SK-N-SH (cell line): ENCODE measurements at regions of chr2 and their contacts with region 1.

Region 1: GRCh38 chr2:176554101-176555048 is 285.1 kb downstream of the MTX2 start:
- DNase-seq: peak; percentile 83
- H3K4me3 ChIP-seq: peak overlapping the region; percentile 16 to 39
- H3K27ac ChIP-seq: peak overlapping the region; percentile 10 to 94; a peak in 3 of 4 replicates
- H3K4me1 ChIP-seq: peaks cover 8 to 22% of the 10 kb centered on the region in 2 experiments; a peak in 3 of 4 replicates
- H3K27me3 ChIP-seq: no peaks in the 10 kb centered on the region
- CTCF ChIP-seq: peak; percentile 79
- EP300 ChIP-seq: peak in 1 of 2 experiments; percentile 40; a peak in 1 of 4 replicates
- RAD21 ChIP-seq: peak; percentile 89

Region 2: GRCh38 chr2:176146101-176146500 is 408.3 kb before region 1 on chr2:
- CTCF ChIA-PET with region 1: interaction called, 107 read pairs
- POLR2A ChIA-PET with region 1: interaction called, 18 read pairs
- DNase-seq: no peak
- H3K4me3 ChIP-seq: no peak overlapping the region
- H3K27ac ChIP-seq: no peak overlapping the region
- H3K4me1 ChIP-seq: peaks cover 0 to 9% of the 10 kb centered on the region in 2 experiments; a peak in 1 of 4 replicates
- H3K27me3 ChIP-seq: no peaks in the 10 kb centered on the region
- CTCF ChIP-seq: no peak
- EP300 ChIP-seq: no peak
- RAD21 ChIP-seq: no peak

Region 3: GRCh38 chr2:176525086-176525485 is 29.3 kb before region 1 on chr2:
- CTCF ChIA-PET with region 1: interaction called, 10 read pairs
- POLR2A ChIA-PET with region 1: no interaction called
- DNase-seq: no peak
- H3K4me3 ChIP-seq: no peak overlapping the region
- H3K27ac ChIP-seq: no peak overlapping the region
- H3K4me1 ChIP-seq: peaks cover 3 to 7% of the 10 kb centered on the region in 2 experiments; a peak in 2 of 4 replicates
- H3K27me3 ChIP-seq: no peaks in the 10 kb centered on the region
- CTCF ChIP-seq: no peak
- EP300 ChIP-seq: no peak
- RAD21 ChIP-seq: no peak

Region 4: GRCh38 chr2:176574484-176575236 is 20.3 kb after region 1 on chr2:
- CTCF ChIA-PET with region 1: interaction called, 55 read pairs
- POLR2A ChIA-PET with region 1: interaction called, 13 read pairs
- DNase-seq: peak; percentile 59
- H3K4me3 ChIP-seq: no peak overlapping the region; a peak in 1 of 4 replicates
- H3K27ac ChIP-seq: peak overlapping the region; percentile 39 to 99; a peak in 3 of 4 replicates
- H3K4me1 ChIP-seq: peaks cover 7 to 45% of the 10 kb centered on the region in 2 experiments
- H3K27me3 ChIP-seq: no peaks in the 10 kb centered on the region
- CTCF ChIP-seq: no peak
- EP300 ChIP-seq: peak; percentile 83 to 100
- RAD21 ChIP-seq: peak; percentile 42

Region 5: GRCh38 chr2:176643646-176644045 is 89.3 kb after region 1 on chr2:
- CTCF ChIA-PET with region 1: interaction called, 40 read pairs
- POLR2A ChIA-PET with region 1: interaction called, 13 read pairs
- DNase-seq: peak; percentile 62
- H3K4me3 ChIP-seq: no peak overlapping the region
- H3K27ac ChIP-seq: peak overlapping the region in 1 of 2 experiments; percentile 29; a peak in 2 of 4 replicates
- H3K4me1 ChIP-seq: peaks cover 15 to 26% of the 10 kb centered on the region in 2 experiments; a peak in 3 of 4 replicates
- H3K27me3 ChIP-seq: no peaks in the 10 kb centered on the region
- CTCF ChIP-seq: 0 out of 2 replicates have a peak, but pooled peaks have one; percentile 7
- EP300 ChIP-seq: no peak
- RAD21 ChIP-seq: no peak

Region 6: GRCh38 chr2:176763851-176764404 is 209.6 kb after region 1 on chr2:
- CTCF ChIA-PET with region 1: no interaction called
- POLR2A ChIA-PET with region 1: no interaction called
- DNase-seq: no peak
- H3K4me3 ChIP-seq: no peak overlapping the region
- H3K27ac ChIP-seq: no peak overlapping the region
- H3K4me1 ChIP-seq: peaks cover 0 to 3% of the 10 kb centered on the region in 2 experiments; a peak in 2 of 4 replicates
- H3K27me3 ChIP-seq: no peaks in the 10 kb centered on the region
- CTCF ChIP-seq: no peak
- EP300 ChIP-seq: no peak
- RAD21 ChIP-seq: no peak

Region 7: DNA sequence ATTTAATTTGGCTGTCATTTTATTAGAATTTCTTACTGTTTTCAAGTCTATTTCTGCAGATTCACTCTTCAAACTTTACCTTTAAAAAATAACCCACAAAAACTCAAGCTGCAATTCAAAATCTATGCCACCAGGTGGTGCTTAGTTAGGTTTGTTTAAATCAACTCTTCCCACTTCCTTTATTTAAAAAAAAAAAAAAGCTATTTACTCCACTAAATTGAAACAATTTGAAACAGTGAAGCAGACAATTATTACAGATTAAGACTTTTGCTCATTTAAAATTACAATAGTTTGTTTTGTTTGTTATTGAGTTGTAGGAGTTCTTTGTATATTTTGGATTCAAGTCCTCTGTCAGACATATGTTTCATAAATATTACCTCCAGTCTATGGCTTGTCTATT is 1218.2 kb after region 1 on chr2:
- CTCF ChIA-PET with region 1: no interaction called
- POLR2A ChIA-PET with region 1: no interaction called
- DNase-seq: peak; percentile 12
- H3K4me3 ChIP-seq: no peak overlapping the region
- H3K27ac ChIP-seq: no peak overlapping the region
- H3K4me1 ChIP-seq: no peaks in the 10 kb centered on the region
- H3K27me3 ChIP-seq: no peaks in the 10 kb centered on the region
- CTCF ChIP-seq: peak; percentile 70
- EP300 ChIP-seq: no peak
- RAD21 ChIP-seq: peak; percentile 41; the same call in 1 of the 2 replicates